BJ (cell line): ENCODE measurements at regions of chr11 and their contacts with region 1.

Region 1: GRCh38 chr11:57699813-57700212 is 12.2 kb downstream of the MED19 start:
- DNase-seq: no peak
- H3K4me3 ChIP-seq: no peak overlapping the region
- H3K27me3 ChIP-seq: no peaks in the 10 kb centered on the region
- CTCF ChIP-seq: no peak

Region 2: GRCh38 chr11:57680552-57680874 is 19.3 kb before region 1 on chr11:
- CTCF ChIA-PET with region 1: interaction called, 3 read pairs
- POLR2A ChIA-PET with region 1: interaction called, 17 read pairs
- DNase-seq: no peak
- H3K4me3 ChIP-seq: no peak overlapping the region
- H3K27me3 ChIP-seq: no peaks in the 10 kb centered on the region
- CTCF ChIP-seq: no peak